ENCODE measurements at regions of chr13 and their contacts with region 1.

Region 1: GRCh38 chr13:77026818-77027585 is at the start of gene FBXL3:
- DNase-seq: peak; percentile 83
- ATAC-seq: peak; percentile 57
- H3K4me3 Mint-ChIP-seq: peak within 1 kb of the TSS; percentile 98
- H3K27ac Mint-ChIP-seq: peak within 1 kb of the TSS; percentile 94
- H3K4me1 Mint-ChIP-seq: peaks cover 43% of the 10 kb centered on the region
- H3K27me3 Mint-ChIP-seq: no peaks in the 10 kb centered on the region
- CTCF ChIP-seq: no peak
- total RNA-seq, gene FBXL3: 32.8 to 34.3 TPM

Region 2: DNA sequence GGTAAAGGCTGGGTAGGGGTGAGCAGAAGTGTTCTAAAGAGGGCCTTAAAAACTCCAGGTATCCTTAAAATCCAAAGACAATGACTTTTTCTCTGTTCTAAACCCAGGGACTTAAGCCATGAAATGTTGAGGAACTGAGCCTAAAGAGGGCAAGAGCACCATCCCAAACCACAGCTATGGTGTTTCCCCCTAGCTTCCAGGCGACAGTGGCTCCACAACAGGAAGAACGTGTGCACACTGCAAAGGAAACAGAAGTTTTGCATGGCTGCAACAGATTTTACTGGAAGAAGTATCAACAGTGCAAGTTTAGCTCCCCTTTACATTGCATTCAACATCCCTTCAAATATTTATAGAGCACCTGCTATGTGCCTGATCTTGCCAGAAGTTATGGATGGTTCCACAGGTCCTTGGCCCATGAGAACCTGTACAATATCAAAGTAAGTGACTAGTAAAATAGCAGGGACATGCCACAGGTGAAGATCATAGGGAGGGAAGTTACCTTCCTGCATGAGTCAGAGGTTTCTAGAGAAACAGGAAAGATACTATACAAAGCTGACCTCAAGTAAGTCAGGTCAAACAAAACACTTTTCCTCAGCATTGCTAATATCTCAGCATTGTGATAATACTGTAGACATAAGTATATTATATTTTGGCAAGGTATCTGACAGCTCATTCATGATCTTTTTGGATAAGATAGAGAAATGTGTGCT is 132.4 kb before region 1 on chr13:
- CTCF ChIA-PET with region 1: no interaction called
- POLR2A ChIA-PET with region 1: no interaction called
- intact Hi-C with region 1: no loop called
- DNase-seq: no peak
- ATAC-seq: peak; percentile 85
- H3K4me3 Mint-ChIP-seq: no peak overlapping the region
- H3K27ac Mint-ChIP-seq: no peak overlapping the region
- H3K4me1 Mint-ChIP-seq: peaks cover 13% of the 10 kb centered on the region
- H3K27me3 Mint-ChIP-seq: peaks cover 5% of the 10 kb centered on the region
- CTCF ChIP-seq: no peak

Region 3: GRCh38 chr13:76917095-76917494 is 109.9 kb before region 1 on chr13:
- CTCF ChIA-PET with region 1: no interaction called
- POLR2A ChIA-PET with region 1: no interaction called
- intact Hi-C with region 1: no loop called
- DNase-seq: no peak
- ATAC-seq: no peak
- H3K4me3 Mint-ChIP-seq: no peak overlapping the region
- H3K27ac Mint-ChIP-seq: no peak overlapping the region
- H3K4me1 Mint-ChIP-seq: no peaks in the 10 kb centered on the region
- H3K27me3 Mint-ChIP-seq: peaks cover 12% of the 10 kb centered on the region
- CTCF ChIP-seq: no peak

Region 4: DNA sequence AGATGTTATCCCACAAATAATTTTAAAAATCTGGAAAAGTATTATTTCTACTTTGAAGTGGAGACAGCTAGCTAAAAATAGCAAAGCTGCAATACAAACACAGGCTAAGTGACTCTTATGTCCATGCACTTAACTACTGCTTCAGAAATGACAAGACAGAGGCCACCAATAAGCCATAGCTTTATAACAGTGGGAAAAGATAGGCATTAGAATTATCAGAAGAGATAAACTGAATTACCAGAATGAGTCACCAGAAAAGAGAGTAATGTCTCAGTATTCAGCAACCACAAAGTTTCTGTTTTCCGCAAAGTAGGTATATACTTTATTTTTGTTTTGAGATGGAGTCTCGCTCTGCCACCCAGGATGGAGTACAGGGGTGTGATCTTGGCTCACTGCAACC is 18.0 kb before region 1 on chr13:
- CTCF ChIA-PET with region 1: interaction called, 3 read pairs
- POLR2A ChIA-PET with region 1: interaction called, 18 read pairs
- intact Hi-C with region 1: no loop called
- DNase-seq: no peak
- ATAC-seq: peak; percentile 79
- H3K4me3 Mint-ChIP-seq: no peak overlapping the region
- H3K27ac Mint-ChIP-seq: peak overlapping the region; percentile 74
- H3K4me1 Mint-ChIP-seq: peaks cover 38% of the 10 kb centered on the region
- H3K27me3 Mint-ChIP-seq: no peaks in the 10 kb centered on the region
- CTCF ChIP-seq: no peak